Tibial artery (tissue), 4 donors: ENCODE measurements at regions of chr1 and their contacts with region 1.

Region 1: DNA sequence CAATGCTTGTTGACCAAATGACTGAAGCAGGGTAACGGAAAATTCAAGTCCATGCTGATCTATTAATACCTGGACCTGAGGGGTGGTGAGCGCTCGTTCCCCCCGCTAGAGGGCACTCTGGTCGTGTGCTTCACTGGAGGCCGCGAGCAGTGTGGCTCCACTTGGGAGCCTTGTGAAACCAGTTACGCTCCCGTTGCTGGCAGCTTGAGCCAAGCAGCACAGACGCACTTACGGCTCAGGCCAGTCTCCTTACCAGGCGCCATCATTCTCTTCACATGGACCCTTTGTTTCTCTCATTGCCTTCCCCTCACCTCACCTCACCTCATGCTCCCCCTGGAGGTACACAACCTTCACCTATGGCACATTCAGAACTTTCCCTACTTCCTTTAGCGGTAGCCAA is 49.7 kb upstream of the TSPAN2 start:
- DNase-seq: peak; percentile 90 to 95
- H3K4me3 ChIP-seq: no peak overlapping the region
- H3K27ac ChIP-seq: peak overlapping the region; percentile 58 to 93
- H3K4me1 ChIP-seq: peaks cover 6 to 40% (median 23%) of the 10 kb centered on the region in 4 donors
- H3K27me3 ChIP-seq: no peaks in the 10 kb centered on the region
- CTCF ChIP-seq: peak; percentile 91 to 92

Region 2: GRCh38 chr1:115089420-115090185 is 49.4 kb before region 1 on chr1 and contains the start of gene TSPAN2:
- intact Hi-C with region 1: loop called (anchors 5 kb)
- DNase-seq: peak; percentile 92 to 97
- H3K4me3 ChIP-seq: peak within 1 kb of the TSS; percentile 69
- H3K27ac ChIP-seq: peak within 1 kb of the TSS; percentile 97
- H3K4me1 ChIP-seq: peaks cover 0 to 54% (median 20%) of the 10 kb centered on the region in 4 donors
- H3K27me3 ChIP-seq: no peaks in the 10 kb centered on the region
- CTCF ChIP-seq: peak; percentile 49 to 50

Region 3: DNA sequence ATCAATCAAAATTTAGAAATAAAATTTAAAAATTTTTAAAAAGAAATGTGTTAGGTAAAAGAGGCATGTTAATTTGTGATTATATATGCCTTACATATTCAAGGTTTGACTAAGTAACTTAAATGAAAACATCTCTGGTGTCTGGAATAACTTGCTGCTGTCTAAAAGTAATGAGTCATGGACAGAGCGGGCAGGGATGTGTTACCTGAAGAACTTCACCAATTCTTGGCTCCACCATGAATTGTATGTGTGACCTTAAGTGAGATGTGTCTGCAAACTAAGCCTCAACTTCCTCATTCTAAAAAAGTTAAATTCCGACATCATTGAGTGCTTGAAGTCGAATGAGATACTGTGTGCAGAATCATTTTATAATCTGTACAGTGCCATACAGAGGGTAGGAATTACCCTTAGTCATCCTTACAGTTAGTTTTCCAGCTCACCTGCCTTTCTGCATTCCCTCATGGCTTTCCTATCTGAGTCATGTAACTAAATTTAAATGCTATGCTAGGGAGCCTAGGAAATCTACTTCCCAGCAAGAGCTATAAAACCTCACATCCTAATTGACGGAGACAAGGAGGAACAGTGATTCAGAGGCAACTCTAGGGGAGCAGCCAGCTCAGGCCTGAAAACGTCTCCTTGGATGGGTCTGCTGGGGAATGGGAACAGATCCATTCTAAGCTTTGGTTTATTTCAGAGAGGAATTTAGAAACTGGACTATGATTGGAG is 51.0 kb after region 1 on chr1:
- intact Hi-C with region 1: loop called (anchors 10 kb)
- DNase-seq: no peak
- H3K4me3 ChIP-seq: no peak overlapping the region
- H3K27ac ChIP-seq: peak overlapping the region; percentile 58 to 83
- H3K4me1 ChIP-seq: peaks cover 0 to 50% (median 33%) of the 10 kb centered on the region in 4 donors
- H3K27me3 ChIP-seq: no peaks in the 10 kb centered on the region
- CTCF ChIP-seq: no peak

Region 4: DNA sequence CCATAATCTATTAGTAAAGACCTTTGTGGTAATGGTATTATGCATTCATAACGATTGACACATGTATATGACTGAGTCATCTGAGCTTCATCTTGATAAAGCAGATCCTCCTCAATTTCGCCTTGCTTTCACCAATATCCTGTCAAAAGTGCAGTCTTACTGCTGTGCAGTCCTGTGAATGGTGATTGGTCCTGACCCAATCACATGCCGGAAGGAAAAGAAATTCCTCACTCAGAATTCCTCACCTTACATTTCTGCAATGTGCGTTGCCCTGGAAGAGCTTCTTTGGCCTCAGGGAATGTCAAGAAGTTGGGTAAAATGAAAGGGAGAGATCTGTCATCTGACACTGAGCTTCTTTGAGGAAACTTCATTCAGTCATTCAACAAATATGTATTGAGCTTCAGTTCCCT is 71.3 kb after region 1 on chr1:
- intact Hi-C with region 1: no loop called
- DNase-seq: no peak
- H3K4me3 ChIP-seq: no peak overlapping the region
- H3K27ac ChIP-seq: no peak overlapping the region
- H3K4me1 ChIP-seq: peaks cover 0 to 14% (median 6%) of the 10 kb centered on the region in 4 donors
- H3K27me3 ChIP-seq: no peaks in the 10 kb centered on the region
- CTCF ChIP-seq: no peak

Region 5: DNA sequence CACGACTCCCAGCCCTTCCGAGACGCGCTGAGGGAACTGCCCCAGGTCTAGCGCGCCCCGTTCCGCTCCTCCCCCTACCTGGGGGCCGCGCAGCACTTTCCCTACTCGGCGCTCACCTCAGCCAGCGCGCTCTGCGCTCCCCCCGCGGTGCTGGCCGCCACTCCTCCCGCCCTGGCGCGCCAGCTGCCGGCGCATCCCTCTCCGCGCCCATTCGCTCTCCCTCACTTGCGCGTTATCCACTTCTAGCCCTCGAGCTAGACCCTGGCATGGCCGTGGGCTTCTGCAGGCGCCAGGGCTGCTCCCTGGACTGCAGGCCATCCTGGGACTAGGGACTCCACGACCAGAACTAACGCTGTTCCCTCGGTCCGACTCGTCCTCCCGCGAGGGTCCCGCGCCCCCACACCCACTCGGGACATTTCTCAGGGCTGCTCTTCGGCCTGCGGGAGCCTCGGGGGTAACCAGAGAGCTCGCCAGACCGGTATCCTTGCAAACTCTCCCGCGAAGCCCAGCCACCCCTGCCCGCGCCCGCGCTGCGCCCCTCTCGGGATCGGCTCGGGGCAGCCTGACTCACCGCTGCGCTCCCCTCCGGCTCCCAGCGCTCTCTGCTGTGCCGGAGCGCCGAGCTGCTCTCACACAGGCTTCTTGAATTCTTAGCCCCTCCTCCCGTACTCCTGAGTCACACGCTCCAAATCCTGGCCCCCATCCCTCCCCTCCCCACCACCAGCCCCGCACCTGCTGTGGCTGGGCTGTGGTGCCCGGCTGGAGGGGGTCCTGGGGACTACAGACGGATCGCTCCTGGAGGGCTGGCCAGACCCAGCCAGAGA is 198.9 kb after region 1 on chr1 and contains the start of gene NGF:
- intact Hi-C with region 1: loop called (anchors 10 kb)
- DNase-seq: peak; percentile 52 to 84
- H3K4me3 ChIP-seq: peak within 1 kb of the TSS; percentile 69 to 72
- H3K27ac ChIP-seq: peak within 1 kb of the TSS; percentile 79
- H3K4me1 ChIP-seq: peaks cover 0 to 75% (median 37%) of the 10 kb centered on the region in 4 donors
- H3K27me3 ChIP-seq: no peaks in the 10 kb centered on the region
- CTCF ChIP-seq: no peak

Region 6: DNA sequence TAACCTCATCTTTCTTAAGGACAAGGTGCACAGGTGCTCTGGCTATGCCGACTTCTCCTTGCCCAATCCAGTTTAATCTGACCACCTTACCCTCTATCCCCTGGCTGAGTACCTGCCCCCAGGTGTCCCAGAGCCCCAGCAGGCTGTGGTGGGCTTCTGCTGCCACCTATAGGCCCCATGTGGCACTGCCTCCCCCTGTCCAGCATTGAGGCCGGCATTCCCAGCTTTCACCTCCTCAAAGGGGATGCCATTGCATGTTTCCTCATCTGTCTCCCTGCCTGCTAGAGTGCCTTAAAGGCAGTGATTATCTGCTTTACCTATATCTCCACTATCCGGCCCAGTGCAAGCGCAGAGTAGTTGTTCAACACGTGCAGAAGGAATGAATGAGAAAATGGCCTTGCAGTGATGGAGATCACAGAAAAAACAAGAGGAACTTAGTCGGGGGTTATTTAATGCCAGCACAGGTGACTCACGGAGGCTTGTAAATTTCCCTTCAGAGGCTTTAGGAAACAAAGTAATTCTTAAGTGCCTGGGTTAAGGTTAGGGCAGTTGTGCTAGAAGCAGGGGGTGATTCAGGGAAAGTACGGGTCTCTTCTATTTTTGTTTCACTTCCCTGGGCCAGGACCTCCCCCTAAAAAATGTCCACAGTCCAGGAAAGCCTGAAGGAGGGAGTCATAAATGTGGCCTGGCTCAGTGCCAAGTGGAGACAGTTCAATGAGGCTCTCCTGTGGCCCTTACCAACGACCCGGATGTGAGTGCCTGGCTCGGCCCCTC is 330.9 kb after region 1 on chr1:
- intact Hi-C with region 1: loop called (anchors 1 kb)
- DNase-seq: no peak
- H3K4me3 ChIP-seq: no peak overlapping the region
- H3K27ac ChIP-seq: no peak overlapping the region
- H3K4me1 ChIP-seq: no peaks in the 10 kb centered on the region
- H3K27me3 ChIP-seq: no peaks in the 10 kb centered on the region
- CTCF ChIP-seq: peak; percentile 85 to 93

Region 7: GRCh38 chr1:115595279-115596079 is 456.5 kb after region 1 on chr1:
- intact Hi-C with region 1: loop called (anchors 5 kb)
- DNase-seq: peak; percentile 84 to 91
- H3K4me3 ChIP-seq: no peak overlapping the region
- H3K27ac ChIP-seq: no peak overlapping the region
- H3K4me1 ChIP-seq: peaks cover 0 to 6% (median 2%) of the 10 kb centered on the region in 4 donors
- H3K27me3 ChIP-seq: no peaks in the 10 kb centered on the region
- CTCF ChIP-seq: peak; percentile 88 to 95